ENCODE measurements at regions of chr1 and their contacts with region 1.

Region 1: GRCh38 chr1:225777583-225778336 is at the start of gene SRP9:
- DNase-seq: peak; percentile 98 to 100 (median 99)
- ATAC-seq: peak; percentile 90
- H3K4me3 ChIP-seq: peak within 1 kb of the TSS; percentile 68
- H3K4me3 Mint-ChIP-seq: no peak within 1 kb of the TSS
- H3K27ac ChIP-seq: peak within 1 kb of the TSS; percentile 95 to 97
- H3K27ac Mint-ChIP-seq: no peak within 1 kb of the TSS
- H3K4me1 ChIP-seq: peaks cover 42% of the 10 kb centered on the region
- H3K4me1 Mint-ChIP-seq: peaks cover 15% of the 10 kb centered on the region
- H3K27me3 ChIP-seq: no peaks in the 10 kb centered on the region
- H3K27me3 Mint-ChIP-seq: no peaks in the 10 kb centered on the region
- CTCF ChIP-seq: peak; percentile 86
- total RNA-seq, gene SRP9: 63.7 to 69.8 TPM

Region 2: GRCh38 chr1:225250432-225250831 is 527.3 kb before region 1 on chr1:
- CTCF ChIA-PET with region 1: no interaction called
- POLR2A ChIA-PET with region 1: no interaction called
- intact Hi-C with region 1: no loop called
- DNase-seq: peak in 3 of 14 experiments; percentile 15 to 50 (median 45)
- ATAC-seq: no peak
- H3K4me3 ChIP-seq: no peak overlapping the region
- H3K4me3 Mint-ChIP-seq: no peak overlapping the region
- H3K27ac ChIP-seq: no peak overlapping the region
- H3K27ac Mint-ChIP-seq: no peak overlapping the region
- H3K4me1 ChIP-seq: no peaks in the 10 kb centered on the region
- H3K4me1 Mint-ChIP-seq: no peaks in the 10 kb centered on the region
- H3K27me3 ChIP-seq: peaks cover 0 to 4% of the 10 kb centered on the region in 2 experiments
- H3K27me3 Mint-ChIP-seq: peaks cover 21% of the 10 kb centered on the region
- CTCF ChIP-seq: no peak

Region 3: DNA sequence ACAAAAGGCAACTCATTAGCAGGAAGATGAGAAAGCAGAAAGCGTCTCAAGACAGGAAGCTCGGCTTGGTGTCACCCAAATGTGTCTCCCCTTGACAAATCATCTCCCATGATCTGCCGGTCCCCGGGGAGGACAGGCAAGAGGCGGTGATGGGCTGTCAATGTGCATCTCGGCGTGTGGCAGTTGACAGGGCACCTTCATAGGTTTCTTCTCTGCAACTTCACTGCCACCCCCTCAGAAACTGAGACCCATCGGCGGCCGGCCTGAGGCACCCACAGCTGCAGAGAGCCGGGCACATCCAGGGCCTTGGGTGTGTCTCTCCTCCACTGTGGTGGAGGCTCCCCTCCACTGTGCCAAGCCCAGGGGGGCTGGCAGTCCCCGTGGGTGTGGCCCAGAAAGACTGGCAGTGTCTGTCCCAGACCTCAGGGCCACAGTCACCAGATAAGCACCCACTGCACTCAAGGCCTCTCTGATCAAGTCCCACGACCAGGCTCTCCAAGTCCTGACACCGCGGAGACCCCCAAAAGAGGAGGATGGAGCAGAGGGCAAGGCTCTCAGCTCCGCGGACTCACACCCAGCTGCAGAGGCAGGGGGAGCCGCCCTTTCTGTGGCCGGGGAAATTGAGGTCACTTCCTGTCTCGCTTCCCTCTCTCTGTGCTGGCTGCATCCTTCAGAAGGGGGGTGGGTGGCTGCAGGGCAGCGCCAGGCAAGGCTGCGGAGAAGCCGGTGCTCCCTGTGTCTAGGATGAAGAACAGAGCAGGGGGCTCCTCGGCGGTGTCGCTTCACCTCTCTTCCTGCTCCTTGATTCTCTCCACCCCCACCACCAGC is 310.4 kb before region 1 on chr1:
- CTCF ChIA-PET with region 1: interaction called, 5 read pairs
- POLR2A ChIA-PET with region 1: interaction called, 34 read pairs
- intact Hi-C with region 1: loop called in 1 of 2 experiments (anchors 5 kb)
- DNase-seq: peak; percentile 67 to 94 (median 79)
- ATAC-seq: peak; percentile 85
- H3K4me3 ChIP-seq: peak overlapping the region; percentile 79
- H3K4me3 Mint-ChIP-seq: peak overlapping the region; percentile 96
- H3K27ac ChIP-seq: peak overlapping the region; percentile 92 to 94
- H3K27ac Mint-ChIP-seq: peak overlapping the region; percentile 99
- H3K4me1 ChIP-seq: peaks cover 56% of the 10 kb centered on the region
- H3K4me1 Mint-ChIP-seq: peaks cover 40% of the 10 kb centered on the region
- H3K27me3 ChIP-seq: no peaks in the 10 kb centered on the region
- H3K27me3 Mint-ChIP-seq: no peaks in the 10 kb centered on the region
- CTCF ChIP-seq: no peak

Region 4: GRCh38 chr1:225794954-225795353 is 17.2 kb after region 1 on chr1:
- CTCF ChIA-PET with region 1: interaction called, 7 read pairs
- POLR2A ChIA-PET with region 1: interaction called, 34 read pairs
- intact Hi-C with region 1: no loop called
- DNase-seq: no peak
- ATAC-seq: no peak
- H3K4me3 ChIP-seq: no peak overlapping the region
- H3K4me3 Mint-ChIP-seq: no peak overlapping the region
- H3K27ac ChIP-seq: no peak overlapping the region
- H3K27ac Mint-ChIP-seq: no peak overlapping the region
- H3K4me1 ChIP-seq: no peaks in the 10 kb centered on the region
- H3K4me1 Mint-ChIP-seq: no peaks in the 10 kb centered on the region
- H3K27me3 ChIP-seq: no peaks in the 10 kb centered on the region
- H3K27me3 Mint-ChIP-seq: no peaks in the 10 kb centered on the region
- CTCF ChIP-seq: no peak

Region 5: GRCh38 chr1:225866061-225866837 is 88.5 kb after region 1 on chr1:
- CTCF ChIA-PET with region 1: interaction called, 5 read pairs
- POLR2A ChIA-PET with region 1: interaction called, 10 read pairs
- intact Hi-C with region 1: loop called in 1 of 2 experiments (anchors 5 kb)
- DNase-seq: peak; percentile 46 to 87 (median 71)
- ATAC-seq: peak; percentile 93
- H3K4me3 ChIP-seq: peak overlapping the region; percentile 10
- H3K4me3 Mint-ChIP-seq: peak overlapping the region; percentile 56
- H3K27ac ChIP-seq: peak overlapping the region; percentile 51 to 64
- H3K27ac Mint-ChIP-seq: peak overlapping the region; percentile 87
- H3K4me1 ChIP-seq: peaks cover 48% of the 10 kb centered on the region
- H3K4me1 Mint-ChIP-seq: peaks cover 52% of the 10 kb centered on the region
- H3K27me3 ChIP-seq: no peaks in the 10 kb centered on the region
- H3K27me3 Mint-ChIP-seq: no peaks in the 10 kb centered on the region
- CTCF ChIP-seq: no peak

Region 6: DNA sequence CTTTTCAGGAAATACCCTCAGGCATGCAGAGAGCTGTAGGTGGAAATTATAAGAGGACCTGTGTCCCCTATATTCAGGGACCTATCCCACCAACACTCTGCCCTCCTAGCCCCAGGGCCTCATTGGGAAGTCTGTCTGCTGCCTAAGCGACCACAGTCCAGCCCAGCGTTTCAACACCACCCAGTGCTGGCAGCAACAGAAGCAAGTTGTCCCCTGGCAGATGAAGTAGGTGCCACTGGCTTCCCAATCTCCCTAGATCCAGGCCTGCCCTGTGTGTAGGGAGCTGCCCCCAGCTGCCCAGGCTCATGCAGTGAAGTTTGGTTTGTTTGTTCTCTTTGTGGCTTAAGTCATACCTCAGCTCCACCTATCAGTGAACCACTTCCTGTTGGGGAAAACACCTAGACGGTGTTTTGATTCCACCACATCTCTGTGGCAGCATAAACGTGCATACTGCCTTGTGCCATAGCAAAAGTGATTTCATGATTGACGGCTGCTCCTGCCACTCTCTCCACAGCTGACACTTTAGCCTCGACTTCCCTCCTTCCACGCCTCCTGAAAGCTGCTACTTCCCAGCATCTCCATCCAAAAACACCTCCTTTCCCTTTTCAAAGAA is 119.3 kb after region 1 on chr1:
- CTCF ChIA-PET with region 1: interaction called, 13 read pairs
- POLR2A ChIA-PET with region 1: interaction called, 58 read pairs
- intact Hi-C with region 1: loop called in 1 of 2 experiments (anchors 10 kb)
- DNase-seq: peak; percentile 45 to 95 (median 60)
- ATAC-seq: peak; percentile 92
- H3K4me3 ChIP-seq: peak overlapping the region; percentile 26
- H3K4me3 Mint-ChIP-seq: peak overlapping the region; percentile 55
- H3K27ac ChIP-seq: peak overlapping the region; percentile 81 to 90
- H3K27ac Mint-ChIP-seq: peak overlapping the region; percentile 98
- H3K4me1 ChIP-seq: peaks cover 53% of the 10 kb centered on the region
- H3K4me1 Mint-ChIP-seq: peaks cover 60% of the 10 kb centered on the region
- H3K27me3 ChIP-seq: no peaks in the 10 kb centered on the region
- H3K27me3 Mint-ChIP-seq: no peaks in the 10 kb centered on the region
- CTCF ChIP-seq: no peak

Region 7: DNA sequence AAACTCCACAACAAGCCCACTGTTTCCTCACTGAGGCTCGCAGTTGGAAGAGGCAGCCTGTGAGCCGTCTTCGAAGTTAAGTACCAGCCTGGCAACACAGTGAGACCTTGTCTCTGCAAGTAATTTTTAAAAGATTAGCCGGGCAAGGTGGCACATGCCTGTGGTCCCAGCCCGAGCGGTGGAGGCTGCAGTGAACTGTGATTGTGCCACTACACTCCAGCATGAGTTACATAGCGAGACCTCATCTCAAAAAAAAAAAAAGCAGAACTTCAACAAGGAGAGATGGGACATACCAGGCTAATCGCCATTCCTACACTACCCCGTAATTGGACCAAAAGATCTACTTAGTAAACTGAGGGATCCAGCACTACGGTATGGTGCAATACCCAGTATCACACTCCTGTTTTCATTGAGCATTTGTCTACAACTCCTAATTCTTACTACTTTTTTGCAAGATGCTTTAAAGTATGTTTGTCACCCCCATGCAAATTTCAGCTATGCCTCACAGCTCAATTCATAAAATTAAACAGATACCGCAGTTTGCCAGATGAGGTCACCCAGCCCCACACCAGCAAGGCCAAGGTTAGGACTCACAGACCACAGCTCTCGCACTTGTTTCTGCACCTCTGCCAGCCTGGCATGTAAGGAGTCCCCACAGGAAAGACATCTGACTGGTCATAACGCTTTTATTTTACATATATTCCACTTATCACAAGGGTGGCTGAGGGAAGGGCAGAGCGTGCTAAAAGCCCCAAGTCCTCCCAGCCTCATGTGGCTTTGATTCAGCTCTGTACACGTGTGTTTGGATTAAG is 200.4 kb after region 1 on chr1:
- CTCF ChIA-PET with region 1: interaction called, 5 read pairs
- POLR2A ChIA-PET with region 1: interaction called, 5 read pairs
- intact Hi-C with region 1: loop called in 1 of 2 experiments (anchors 5 kb)
- DNase-seq: peak in 1 of 14 experiments; percentile 7
- ATAC-seq: no peak
- H3K4me3 ChIP-seq: no peak overlapping the region
- H3K4me3 Mint-ChIP-seq: no peak overlapping the region
- H3K27ac ChIP-seq: no peak overlapping the region
- H3K27ac Mint-ChIP-seq: no peak overlapping the region
- H3K4me1 ChIP-seq: peaks cover 5% of the 10 kb centered on the region
- H3K4me1 Mint-ChIP-seq: peaks cover 6% of the 10 kb centered on the region
- H3K27me3 ChIP-seq: no peaks in the 10 kb centered on the region
- H3K27me3 Mint-ChIP-seq: no peaks in the 10 kb centered on the region
- CTCF ChIP-seq: no peak

Measured in CD4-positive, alpha-beta T cell (primary cell).